GM13977 (cell line): ENCODE measurements at regions of chr3 and their contacts with region 1.

Region 1: DNA sequence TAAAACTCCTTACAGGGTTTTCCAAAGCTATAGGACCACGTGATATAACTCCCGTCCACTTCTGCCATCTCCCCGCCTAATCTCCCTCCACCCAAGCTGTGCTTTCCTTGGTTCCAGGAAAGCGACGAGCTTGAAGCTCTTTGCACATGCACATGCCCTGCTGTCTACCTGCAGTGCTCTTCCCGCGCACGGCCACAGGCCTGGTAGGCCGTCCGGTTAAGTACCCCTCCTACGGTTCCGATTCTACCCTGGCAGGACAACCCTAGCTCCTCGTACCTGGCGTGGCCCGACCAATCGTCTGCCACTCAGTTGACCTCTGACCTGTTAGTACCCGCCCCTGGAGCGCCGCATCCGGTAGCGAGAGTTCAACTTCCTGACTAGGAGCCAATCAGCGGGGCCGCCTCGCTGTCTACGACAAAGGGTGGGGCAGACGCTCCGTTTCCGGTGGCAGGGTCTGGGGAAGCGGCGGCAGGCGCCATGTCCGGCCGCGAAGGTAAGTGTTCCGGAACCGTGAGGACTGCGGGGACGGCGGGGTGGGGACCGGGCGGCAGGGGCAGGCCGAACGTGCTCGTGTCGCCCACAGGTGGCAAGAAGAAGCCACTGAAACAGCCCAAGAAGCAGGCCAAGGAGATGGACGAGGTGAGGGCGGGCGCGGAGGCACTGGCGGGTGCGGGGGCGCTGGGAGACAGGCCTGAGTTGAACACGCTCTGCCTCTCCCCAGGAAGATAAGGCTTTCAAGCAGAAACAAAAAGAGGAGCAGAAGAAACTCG is at the starts of genes CCDC51 and TMA7:
- DNase-seq: peak; percentile 98
- CTCF ChIP-seq: no peak

Region 2: GRCh38 chr3:47984097-47984728 is 455.8 kb before region 1 on chr3:
- in situ Hi-C with region 1: no loop called
- DNase-seq: no peak
- CTCF ChIP-seq: no peak

Region 3: GRCh38 chr3:48194446-48195071 is 245.4 kb before region 1 on chr3:
- in situ Hi-C with region 1: loop called (anchors 10 kb)
- DNase-seq: peak; percentile 60
- CTCF ChIP-seq: peak; percentile 85